B cell (primary cell): ENCODE measurements at regions of chr22 and their contacts with region 1.

Region 1: DNA sequence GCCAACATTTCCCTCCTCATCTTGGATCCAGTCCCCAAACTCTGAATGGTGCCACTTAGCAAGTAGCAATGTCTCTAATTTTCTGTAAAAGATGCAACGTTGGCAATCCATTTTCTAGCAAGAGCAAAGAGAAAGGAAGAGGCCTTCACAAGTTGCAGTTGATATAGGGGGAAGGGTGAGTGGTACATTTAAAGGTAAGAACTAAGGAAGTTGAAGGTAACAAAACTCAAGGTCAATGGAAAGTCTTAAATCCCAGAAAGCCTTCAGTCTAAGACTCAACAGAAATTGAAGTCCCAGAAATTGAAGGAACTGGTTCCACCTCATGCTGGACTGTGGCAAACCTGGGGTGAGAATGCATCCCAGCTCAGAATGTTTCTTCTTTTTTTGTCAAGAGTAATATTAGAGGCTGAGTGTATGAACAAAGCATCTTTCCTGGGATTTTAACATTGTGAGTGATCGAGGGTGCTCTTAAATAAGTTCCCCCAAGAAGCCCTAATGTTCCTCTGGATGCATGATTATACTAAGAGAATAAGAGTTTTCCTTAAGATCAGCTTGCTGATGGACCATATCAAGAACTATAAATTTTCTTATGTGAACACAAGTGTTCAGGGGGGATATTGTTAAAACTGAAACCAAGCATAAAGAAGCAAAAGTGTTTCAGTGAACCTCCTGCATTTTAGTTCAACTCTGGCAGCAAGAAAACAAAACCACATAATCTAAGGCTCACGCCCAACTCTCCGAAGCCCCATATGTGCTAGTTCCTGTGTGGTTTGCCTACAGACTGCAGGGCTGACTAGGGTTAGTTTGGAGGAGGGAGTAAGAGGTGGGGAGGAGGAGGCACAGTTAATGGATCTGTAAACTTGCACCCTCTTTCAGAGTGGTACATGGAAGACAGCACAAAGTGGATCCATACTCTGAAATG is at the start of gene GRAP2:
- DNase-seq: peak; percentile 56
- ATAC-seq: peak; percentile 61
- H3K4me3 ChIP-seq: peak within 1 kb of the TSS; percentile 39 to 81 (median 69)
- H3K4me3 Mint-ChIP-seq: peak within 1 kb of the TSS; percentile 91
- H3K27ac ChIP-seq: peak within 1 kb of the TSS; percentile 62 to 82
- H3K27ac Mint-ChIP-seq: peak within 1 kb of the TSS; percentile 90
- H3K4me1 ChIP-seq: peaks cover 53 to 55% of the 10 kb centered on the region in 2 donors
- H3K4me1 Mint-ChIP-seq: peaks cover 50% of the 10 kb centered on the region
- H3K27me3 ChIP-seq: no peaks in the 10 kb centered on the region
- H3K27me3 Mint-ChIP-seq: no peaks in the 10 kb centered on the region
- CTCF ChIP-seq: no peak
- total RNA-seq, gene GRAP2: 13.5 and 14.4 TPM in 2 replicates

Region 2: GRCh38 chr22:39825661-39826102 is 74.9 kb before region 1 on chr22:
- CTCF ChIA-PET with region 1: no interaction called
- POLR2A ChIA-PET with region 1: no interaction called
- intact Hi-C with region 1: loop called (anchors 5 kb)
- DNase-seq: peak; percentile 72
- ATAC-seq: peak; percentile 96
- H3K4me3 ChIP-seq: peak overlapping the region in 4 of 5 experiments; percentile 24 to 55 (median 44)
- H3K4me3 Mint-ChIP-seq: peak overlapping the region; percentile 83
- H3K27ac ChIP-seq: peak overlapping the region; percentile 50 to 77
- H3K27ac Mint-ChIP-seq: peak overlapping the region; percentile 91
- H3K4me1 ChIP-seq: peaks cover 17 to 36% of the 10 kb centered on the region in 2 donors
- H3K4me1 Mint-ChIP-seq: peaks cover 45% of the 10 kb centered on the region
- H3K27me3 ChIP-seq: no peaks in the 10 kb centered on the region
- H3K27me3 Mint-ChIP-seq: no peaks in the 10 kb centered on the region
- CTCF ChIP-seq: no peak

Region 3: DNA sequence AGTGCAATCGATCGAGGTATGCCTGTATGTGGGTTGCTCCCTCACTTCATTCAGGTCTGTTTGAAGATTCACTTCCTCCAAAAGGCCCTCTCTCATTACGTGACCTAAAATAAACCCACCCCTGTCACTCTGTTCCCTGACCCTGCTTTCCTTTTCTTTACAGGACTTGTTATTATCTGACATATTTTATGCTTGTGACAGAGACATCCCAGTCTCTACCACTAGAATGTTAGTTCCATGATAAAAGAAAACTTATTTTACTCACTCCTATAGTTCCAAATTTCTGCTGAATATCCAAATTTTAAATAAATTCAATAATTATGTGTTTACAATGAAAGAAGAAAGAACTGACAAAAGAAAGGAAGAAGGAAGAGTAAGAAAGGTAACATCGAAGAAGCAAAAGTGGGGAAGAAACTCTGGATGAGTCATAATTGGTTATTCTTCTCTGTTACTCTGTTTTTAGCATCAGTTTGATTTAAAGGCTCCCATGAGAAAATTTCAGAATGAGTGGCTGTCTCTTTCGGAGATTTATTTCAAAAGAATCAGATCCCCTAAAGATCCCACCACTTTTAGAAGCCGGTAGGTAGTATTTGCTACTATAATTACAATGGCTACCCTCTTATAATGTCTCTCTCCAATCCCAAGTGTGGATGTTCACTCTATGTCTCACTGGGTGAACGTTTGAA is 40.5 kb before region 1 on chr22:
- CTCF ChIA-PET with region 1: no interaction called
- POLR2A ChIA-PET with region 1: no interaction called
- intact Hi-C with region 1: loop called (anchors 5 kb)
- DNase-seq: peak; percentile 48
- ATAC-seq: peak; percentile 65
- H3K4me3 ChIP-seq: peak overlapping the region in 1 of 5 experiments; percentile 19
- H3K4me3 Mint-ChIP-seq: peak overlapping the region; percentile 56
- H3K27ac ChIP-seq: no peak overlapping the region
- H3K27ac Mint-ChIP-seq: peak overlapping the region; percentile 37
- H3K4me1 ChIP-seq: peaks cover 24 to 26% of the 10 kb centered on the region in 2 donors
- H3K4me1 Mint-ChIP-seq: peaks cover 30% of the 10 kb centered on the region
- H3K27me3 ChIP-seq: no peaks in the 10 kb centered on the region
- H3K27me3 Mint-ChIP-seq: no peaks in the 10 kb centered on the region
- CTCF ChIP-seq: no peak

Region 4: GRCh38 chr22:39946503-39947219 is 46.1 kb after region 1 on chr22:
- CTCF ChIA-PET with region 1: interaction called, 6 read pairs
- POLR2A ChIA-PET with region 1: no interaction called
- intact Hi-C with region 1: loop called (anchors 5 kb)
- DNase-seq: peak; percentile 60
- ATAC-seq: no peak
- H3K4me3 ChIP-seq: peak overlapping the region in 2 of 5 experiments; percentile 1 to 17
- H3K4me3 Mint-ChIP-seq: peak overlapping the region; percentile 76
- H3K27ac ChIP-seq: peak overlapping the region; percentile 23 to 40
- H3K27ac Mint-ChIP-seq: peak overlapping the region; percentile 57
- H3K4me1 ChIP-seq: peaks cover 73 to 76% of the 10 kb centered on the region in 2 donors
- H3K4me1 Mint-ChIP-seq: peaks cover 70% of the 10 kb centered on the region
- H3K27me3 ChIP-seq: no peaks in the 10 kb centered on the region
- H3K27me3 Mint-ChIP-seq: no peaks in the 10 kb centered on the region
- CTCF ChIP-seq: no peak